ENCODE measurements at regions of chr1 and their contacts with region 1.

Region 1: DNA sequence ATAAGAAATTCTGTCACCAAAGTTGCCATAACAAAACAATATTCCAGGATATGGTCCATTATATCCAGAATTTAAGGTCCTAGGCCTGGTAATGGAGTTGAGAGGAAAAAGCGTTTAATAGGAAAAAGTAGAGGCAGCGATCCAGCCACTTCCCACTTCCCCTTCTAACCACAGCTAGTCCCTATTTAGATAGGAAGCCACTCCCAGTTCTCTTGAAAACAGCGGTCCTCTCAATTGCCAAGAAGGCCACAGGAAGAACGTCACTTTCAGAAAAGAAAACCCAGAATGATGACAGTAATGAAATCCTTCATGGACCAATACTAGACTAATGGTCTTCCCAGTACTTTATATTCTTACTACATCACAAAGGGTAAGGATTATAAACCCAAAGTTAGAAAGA is 38.6 kb downstream of the ABL2 start:
- DNase-seq: no peak
- ATAC-seq: peak; percentile 67

Region 2: GRCh38 chr1:179081687-179082332 is 109.1 kb before region 1 on chr1 and contains the start of gene TOR3A:
- intact Hi-C with region 1: loop called (anchors 2 kb)
- DNase-seq: peak; percentile 96
- ATAC-seq: peak; percentile 99
- total RNA-seq, gene TOR3A: 11.3 TPM

Region 3: DNA sequence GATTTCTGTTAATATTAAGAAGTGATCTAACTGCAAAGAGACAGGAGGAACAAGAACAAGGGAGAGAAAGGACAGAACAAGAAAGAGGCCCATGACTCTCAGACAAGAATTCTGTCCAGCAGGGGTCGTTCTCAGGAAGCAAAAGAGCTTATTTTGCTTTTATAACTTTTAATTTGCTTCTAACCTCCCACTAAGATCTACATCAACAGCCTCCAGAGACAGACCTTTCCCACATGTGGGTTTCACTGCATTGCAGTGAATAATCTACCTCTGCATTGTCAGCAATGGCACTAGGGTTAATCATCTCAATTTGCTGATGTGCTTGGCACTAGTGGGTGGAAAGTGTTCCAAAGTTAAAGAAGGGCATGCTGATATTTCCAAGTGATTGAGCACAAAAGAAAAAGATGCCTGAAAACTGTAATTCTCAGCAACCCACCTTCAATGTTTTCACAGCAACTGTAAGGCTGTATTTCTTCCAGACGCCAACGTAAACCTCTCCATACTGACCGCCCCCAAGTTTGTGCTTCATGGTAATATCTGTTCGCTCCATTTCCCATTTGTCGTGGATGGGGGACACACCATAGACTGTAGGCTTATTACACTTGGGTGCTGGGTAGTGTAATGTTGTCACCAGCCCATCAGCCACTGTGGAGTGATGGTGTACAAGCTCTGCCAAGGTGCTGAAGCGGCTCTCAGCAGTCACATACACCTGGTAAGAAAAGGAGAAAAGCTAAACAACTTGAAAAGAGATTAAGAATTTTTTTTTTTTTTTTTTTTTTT is 69.5 kb before region 1 on chr1:
- intact Hi-C with region 1: loop called (anchors 5 kb)
- DNase-seq: no peak
- ATAC-seq: no peak

Region 4: GRCh38 chr1:179142889-179143299 is 48.0 kb before region 1 on chr1:
- intact Hi-C with region 1: no loop called
- DNase-seq: no peak
- ATAC-seq: no peak

Measured in Right ventricle myocardium inferior (tissue), 1 donor.